ENCODE measurements at regions of chr3 and their contacts with region 1.

Region 1: DNA sequence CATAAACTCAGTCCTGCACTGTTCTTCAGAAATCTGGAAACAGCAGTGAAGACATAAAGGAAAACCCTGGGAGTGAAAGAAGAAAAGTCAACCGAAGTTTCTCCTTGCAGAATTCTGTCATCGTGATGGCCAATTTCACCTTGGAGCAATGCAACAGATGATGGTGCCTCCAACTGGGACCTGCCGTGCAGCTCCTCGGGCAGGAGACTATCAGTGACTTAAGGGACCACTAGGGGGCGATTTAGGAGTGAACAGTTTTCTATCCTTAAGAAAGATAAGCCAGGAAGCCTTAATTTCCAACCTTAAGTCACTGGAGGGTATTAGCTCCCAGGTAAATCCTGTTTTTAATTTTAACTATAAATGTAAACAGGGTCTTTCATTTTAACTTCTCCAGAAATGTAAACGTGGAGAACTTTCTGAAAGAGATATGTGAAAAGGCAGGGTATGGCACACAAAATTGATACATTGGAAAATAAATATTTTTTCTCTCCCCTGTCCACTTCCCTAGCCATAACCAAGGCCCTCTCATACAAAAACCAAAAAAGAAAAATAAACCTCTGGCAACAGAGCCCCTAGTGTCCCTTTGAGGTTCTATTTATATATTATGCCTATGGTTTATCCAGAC is 116.3 kb downstream of the PDZRN3 start:
- DNase-seq: peak; percentile 81
- ATAC-seq: peak; percentile 41
- H3K4me3 ChIP-seq: no peak overlapping the region
- H3K27ac ChIP-seq: peak overlapping the region; percentile 45; the same call in 1 of the 2 replicates
- H3K4me1 ChIP-seq: peaks cover 37% of the 10 kb centered on the region
- H3K27me3 ChIP-seq: no peaks in the 10 kb centered on the region
- CTCF ChIP-seq: peak; percentile 73
- POLR2A ChIP-seq: no peak
- RAD21 ChIP-seq: peak; percentile 83

Region 2: DNA sequence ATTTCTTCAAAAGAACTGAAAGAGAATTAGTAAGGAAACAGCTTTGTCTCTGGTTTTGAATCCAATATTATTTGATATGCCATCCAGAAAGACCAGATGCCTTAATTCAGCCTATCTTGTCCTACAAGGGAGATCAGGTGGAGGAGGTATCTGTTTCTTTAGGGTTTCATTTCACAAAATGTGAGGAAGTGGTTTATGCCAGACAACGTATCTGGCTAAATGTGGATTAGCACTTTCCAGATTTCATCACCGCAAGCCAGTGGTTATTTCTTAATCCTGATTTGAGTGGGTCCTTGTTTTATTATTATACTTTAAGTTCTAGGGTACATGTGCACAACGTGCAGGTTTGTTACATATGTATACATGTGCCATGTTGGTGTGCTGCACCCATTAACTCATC is 175.9 kb before region 1 on chr3:
- CTCF ChIA-PET with region 1: no interaction called
- POLR2A ChIA-PET with region 1: no interaction called
- dilution Hi-C with region 1: no loop called
- in situ Hi-C with region 1: no loop called
- intact Hi-C with region 1: no loop called
- DNase-seq: no peak
- ATAC-seq: no peak
- H3K4me3 ChIP-seq: no peak overlapping the region
- H3K27ac ChIP-seq: no peak overlapping the region
- H3K4me1 ChIP-seq: no peaks in the 10 kb centered on the region
- H3K27me3 ChIP-seq: peaks cover 2% of the 10 kb centered on the region; the same call in 1 of the 2 replicates
- CTCF ChIP-seq: no peak
- POLR2A ChIP-seq: no peak
- RAD21 ChIP-seq: no peak

Region 3: GRCh38 chr3:73547427-73548248 is 39.2 kb after region 1 on chr3:
- CTCF ChIA-PET with region 1: interaction called, 10 read pairs
- POLR2A ChIA-PET with region 1: interaction called, 3 read pairs
- dilution Hi-C with region 1: no loop called
- in situ Hi-C with region 1: no loop called
- intact Hi-C with region 1: loop called (anchors 5 kb)
- DNase-seq: peak; percentile 94
- ATAC-seq: peak; percentile 73
- H3K4me3 ChIP-seq: no peak overlapping the region
- H3K27ac ChIP-seq: peak overlapping the region; percentile 90
- H3K4me1 ChIP-seq: peaks cover 19% of the 10 kb centered on the region
- H3K27me3 ChIP-seq: no peaks in the 10 kb centered on the region
- CTCF ChIP-seq: no peak
- POLR2A ChIP-seq: no peak
- RAD21 ChIP-seq: no peak

Region 4: GRCh38 chr3:73624821-73625665 is 116.6 kb after region 1 on chr3 and contains the start of gene PDZRN3:
- CTCF ChIA-PET with region 1: interaction called, 10 read pairs
- POLR2A ChIA-PET with region 1: no interaction called
- dilution Hi-C with region 1: loop called (anchors 25 kb)
- in situ Hi-C with region 1: loop called (anchors 25 kb)
- intact Hi-C with region 1: loop called (anchors 1 kb)
- DNase-seq: peak; percentile 82
- ATAC-seq: peak; percentile 66
- H3K4me3 ChIP-seq: peak within 1 kb of the TSS; percentile 71
- H3K27ac ChIP-seq: peak within 1 kb of the TSS; percentile 68
- H3K4me1 ChIP-seq: peaks cover 8% of the 10 kb centered on the region
- H3K27me3 ChIP-seq: no peaks in the 10 kb centered on the region
- CTCF ChIP-seq: no peak
- POLR2A ChIP-seq: peak; percentile 71; the same call in 1 of the 2 replicates
- RAD21 ChIP-seq: 0 out of 2 replicates have a peak, but pooled peaks have one; percentile 6
- total RNA-seq, gene PDZRN3: 17.0 and 17.8 TPM in 2 replicates

Region 5: GRCh38 chr3:73766599-73767381 is 258.3 kb after region 1 on chr3:
- CTCF ChIA-PET with region 1: interaction called, 6 read pairs
- POLR2A ChIA-PET with region 1: no interaction called
- dilution Hi-C with region 1: no loop called
- in situ Hi-C with region 1: no loop called
- intact Hi-C with region 1: loop called (anchors 1 kb)
- DNase-seq: peak; percentile 80
- ATAC-seq: peak; percentile 65
- H3K4me3 ChIP-seq: peak overlapping the region; percentile 37; the same call in 1 of the 2 replicates
- H3K27ac ChIP-seq: peak overlapping the region; percentile 99
- H3K4me1 ChIP-seq: peaks cover 8% of the 10 kb centered on the region
- H3K27me3 ChIP-seq: no peaks in the 10 kb centered on the region
- CTCF ChIP-seq: no peak
- POLR2A ChIP-seq: no peak
- RAD21 ChIP-seq: no peak

Region 6: DNA sequence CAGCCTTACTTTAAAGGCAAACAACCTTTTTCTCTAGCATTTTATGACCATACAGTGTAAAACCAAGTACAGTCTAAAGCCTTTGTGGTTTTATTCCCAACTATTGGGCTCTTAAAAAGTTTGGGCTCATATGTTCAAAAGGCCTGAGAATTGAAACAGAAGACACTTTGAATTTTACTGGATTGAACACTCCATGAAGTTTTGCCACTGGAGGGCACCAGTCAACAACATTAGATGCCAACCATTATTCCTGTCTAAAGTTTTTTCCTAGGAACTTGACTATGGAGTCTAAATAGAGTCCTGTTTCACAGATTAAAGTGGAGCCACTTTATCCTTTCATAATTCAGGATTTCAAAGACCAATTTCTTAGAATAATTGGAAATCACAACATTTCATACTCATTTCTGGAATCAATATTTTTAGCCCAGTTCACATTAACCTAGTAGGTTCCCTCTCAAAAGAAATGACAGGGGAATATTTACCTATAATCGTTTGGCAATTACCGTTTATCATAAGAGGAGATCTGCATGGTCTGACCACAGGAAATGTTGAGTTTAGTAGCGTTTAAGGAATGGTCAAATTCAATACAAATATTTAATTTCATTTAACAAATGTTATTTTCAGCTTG is 360.4 kb after region 1 on chr3:
- CTCF ChIA-PET with region 1: no interaction called
- POLR2A ChIA-PET with region 1: no interaction called
- dilution Hi-C with region 1: no loop called
- in situ Hi-C with region 1: no loop called
- intact Hi-C with region 1: loop called (anchors 5 kb)
- DNase-seq: peak; percentile 38
- ATAC-seq: peak; percentile 80
- H3K4me3 ChIP-seq: no peak overlapping the region
- H3K27ac ChIP-seq: no peak overlapping the region
- H3K4me1 ChIP-seq: no peaks in the 10 kb centered on the region
- H3K27me3 ChIP-seq: 0 out of 2 replicates have a peak, but pooled peaks cover 2% of the 10 kb centered on the region
- CTCF ChIP-seq: peak; percentile 68
- POLR2A ChIP-seq: no peak
- RAD21 ChIP-seq: peak; percentile 66

Measured in IMR-90 (cell line).